ENCODE measurements at regions of chr12 and their contacts with region 1.

Region 1: DNA sequence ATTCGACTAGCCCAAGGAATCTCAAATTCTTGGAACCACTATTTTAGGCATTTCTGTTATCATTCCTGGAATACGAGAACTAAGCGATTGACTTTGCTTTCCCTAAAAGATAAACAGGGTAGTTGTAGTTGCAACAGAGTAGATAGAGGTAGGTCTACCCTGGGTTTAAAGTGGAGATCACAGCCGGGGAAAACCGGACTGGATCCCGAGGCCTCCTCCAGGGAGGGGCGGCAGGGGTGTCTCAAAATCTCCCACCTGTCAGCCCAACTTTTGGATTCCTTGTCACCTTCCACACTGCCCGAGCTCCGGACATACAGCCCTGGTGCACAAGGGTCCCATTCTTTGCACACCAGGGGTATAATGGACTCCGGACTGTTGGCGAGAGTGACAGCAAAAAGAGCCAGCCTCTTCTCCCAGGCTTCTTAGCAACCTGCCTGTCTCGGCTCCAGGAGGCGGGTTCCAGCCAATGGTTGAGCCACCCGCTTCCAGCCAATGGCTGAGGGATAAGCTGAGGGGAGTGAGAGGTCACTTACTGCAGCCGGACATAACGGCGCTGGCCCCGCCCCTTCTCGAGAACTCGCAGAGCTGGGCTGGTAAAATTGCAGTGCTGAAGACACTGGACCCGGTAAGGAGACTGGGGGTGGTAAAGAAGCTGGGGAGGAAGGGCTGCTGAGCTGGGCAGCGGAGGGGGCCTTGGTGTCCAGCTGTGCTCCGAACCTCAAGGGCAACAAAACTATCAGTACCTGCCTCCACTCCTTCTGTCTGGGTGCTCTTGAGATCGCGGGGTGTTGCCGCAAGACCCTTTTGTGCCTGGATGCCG is at the start of gene SUOX:
- DNase-seq: peak; percentile 54
- H3K4me3 Mint-ChIP-seq: peak within 1 kb of the TSS; percentile 57
- H3K27ac Mint-ChIP-seq: peak within 1 kb of the TSS; percentile 42
- H3K4me1 Mint-ChIP-seq: peaks cover 35% of the 10 kb centered on the region
- H3K27me3 Mint-ChIP-seq: peaks cover 30% of the 10 kb centered on the region

Region 2: GRCh38 chr12:55973598-55974307 is 23.2 kb before region 1 on chr12 and contains the start of gene RAB5B:
- CTCF ChIA-PET with region 1: interaction called, 14 read pairs
- DNase-seq: peak; percentile 99
- H3K4me3 Mint-ChIP-seq: no peak within 1 kb of the TSS
- H3K27ac Mint-ChIP-seq: no peak within 1 kb of the TSS
- H3K4me1 Mint-ChIP-seq: peaks cover 27% of the 10 kb centered on the region
- H3K27me3 Mint-ChIP-seq: no peaks in the 10 kb centered on the region

Region 3: DNA sequence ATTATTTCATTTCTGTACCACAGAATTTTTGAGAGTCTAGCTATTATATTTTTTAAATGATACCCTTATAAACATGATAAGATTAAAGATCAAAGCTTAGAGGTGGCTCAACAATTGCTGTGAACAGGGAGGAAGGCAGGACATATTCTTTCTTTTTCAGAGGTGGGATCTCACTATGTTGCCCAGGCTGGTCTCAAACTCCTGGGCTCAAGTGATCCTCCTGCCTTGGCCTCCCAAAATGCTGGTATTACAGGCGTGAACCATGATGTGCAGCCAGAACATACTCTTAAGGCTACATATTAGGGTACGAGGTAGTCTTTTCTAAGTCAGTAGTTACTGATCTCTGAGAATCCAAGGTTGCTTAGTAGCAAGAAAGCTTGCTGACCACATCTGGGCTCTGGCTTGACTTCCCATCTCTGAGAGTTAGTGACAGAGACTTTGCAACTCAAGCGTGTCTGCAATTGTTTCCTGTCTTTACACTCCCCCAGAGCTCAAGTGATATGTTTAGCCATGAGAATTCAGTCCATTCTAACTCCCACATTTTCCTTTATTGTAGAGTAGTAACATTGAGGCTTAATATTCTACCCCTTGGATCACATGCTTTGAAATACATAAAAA is 14.5 kb before region 1 on chr12:
- CTCF ChIA-PET with region 1: interaction called, 17 read pairs
- DNase-seq: no peak
- H3K4me3 Mint-ChIP-seq: no peak overlapping the region
- H3K27ac Mint-ChIP-seq: no peak overlapping the region
- H3K4me1 Mint-ChIP-seq: peaks cover 6% of the 10 kb centered on the region
- H3K27me3 Mint-ChIP-seq: no peaks in the 10 kb centered on the region

Region 4: DNA sequence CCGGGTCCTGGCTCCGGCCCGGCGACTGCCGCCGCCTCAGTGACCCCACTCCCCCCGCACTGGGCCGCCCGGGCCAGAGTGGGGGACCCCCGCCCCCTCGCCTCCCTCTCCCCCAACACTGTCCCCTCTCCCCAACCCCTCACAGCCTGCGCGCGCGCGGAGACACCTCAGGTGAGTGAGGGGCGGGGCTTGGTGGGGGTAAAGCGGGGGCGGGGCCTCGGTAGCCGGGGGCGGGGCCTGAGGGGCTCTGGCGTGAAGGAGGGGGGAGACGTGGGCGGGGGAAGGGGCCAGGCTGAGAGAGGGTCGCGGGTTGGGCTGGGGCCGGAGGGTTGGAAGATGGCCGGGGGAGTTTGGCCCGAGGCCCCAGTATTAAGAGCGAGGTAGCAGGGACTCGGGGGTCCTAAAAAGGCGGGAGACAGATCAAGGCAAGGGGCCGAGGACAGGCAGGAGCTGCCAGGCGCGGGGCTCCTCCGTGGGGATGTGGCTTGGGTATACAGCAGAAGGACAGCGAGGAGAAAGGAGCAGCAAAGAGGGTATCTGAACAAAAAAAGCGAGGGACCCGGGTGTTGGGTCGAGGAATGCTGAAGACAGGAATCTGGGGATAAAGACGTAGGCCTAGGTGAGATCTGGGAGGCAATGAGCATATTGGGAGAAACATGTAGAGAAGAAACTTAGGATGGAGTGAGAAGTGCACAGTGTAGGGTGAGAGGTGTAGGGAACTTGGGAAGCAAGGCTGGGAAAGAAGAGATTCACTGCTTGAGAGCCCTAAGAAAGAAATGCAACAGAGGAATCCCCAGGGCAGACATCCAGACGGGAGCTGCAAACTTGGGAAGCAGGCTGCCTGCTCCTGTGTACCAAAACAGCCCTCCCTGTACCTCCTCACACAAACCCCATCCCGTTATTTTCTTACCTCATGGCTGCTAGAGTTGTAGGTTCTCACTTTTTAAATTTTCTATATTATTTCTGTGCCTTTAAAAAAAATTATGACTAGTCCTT is 10.9 kb after region 1 on chr12:
- CTCF ChIA-PET with region 1: interaction called, 10 read pairs
- DNase-seq: peak; percentile 79
- H3K4me3 Mint-ChIP-seq: peak overlapping the region; percentile 77
- H3K27ac Mint-ChIP-seq: peak overlapping the region; percentile 40
- H3K4me1 Mint-ChIP-seq: peaks cover 36% of the 10 kb centered on the region
- H3K27me3 Mint-ChIP-seq: peaks cover 15% of the 10 kb centered on the region

Region 5: GRCh38 chr12:56029666-56030293 is 32.9 kb after region 1 on chr12:
- CTCF ChIA-PET with region 1: interaction called, 128 read pairs
- DNase-seq: peak; percentile 70
- H3K4me3 Mint-ChIP-seq: no peak overlapping the region
- H3K27ac Mint-ChIP-seq: peak overlapping the region; percentile 6
- H3K4me1 Mint-ChIP-seq: peaks cover 53% of the 10 kb centered on the region
- H3K27me3 Mint-ChIP-seq: no peaks in the 10 kb centered on the region

Region 6: DNA sequence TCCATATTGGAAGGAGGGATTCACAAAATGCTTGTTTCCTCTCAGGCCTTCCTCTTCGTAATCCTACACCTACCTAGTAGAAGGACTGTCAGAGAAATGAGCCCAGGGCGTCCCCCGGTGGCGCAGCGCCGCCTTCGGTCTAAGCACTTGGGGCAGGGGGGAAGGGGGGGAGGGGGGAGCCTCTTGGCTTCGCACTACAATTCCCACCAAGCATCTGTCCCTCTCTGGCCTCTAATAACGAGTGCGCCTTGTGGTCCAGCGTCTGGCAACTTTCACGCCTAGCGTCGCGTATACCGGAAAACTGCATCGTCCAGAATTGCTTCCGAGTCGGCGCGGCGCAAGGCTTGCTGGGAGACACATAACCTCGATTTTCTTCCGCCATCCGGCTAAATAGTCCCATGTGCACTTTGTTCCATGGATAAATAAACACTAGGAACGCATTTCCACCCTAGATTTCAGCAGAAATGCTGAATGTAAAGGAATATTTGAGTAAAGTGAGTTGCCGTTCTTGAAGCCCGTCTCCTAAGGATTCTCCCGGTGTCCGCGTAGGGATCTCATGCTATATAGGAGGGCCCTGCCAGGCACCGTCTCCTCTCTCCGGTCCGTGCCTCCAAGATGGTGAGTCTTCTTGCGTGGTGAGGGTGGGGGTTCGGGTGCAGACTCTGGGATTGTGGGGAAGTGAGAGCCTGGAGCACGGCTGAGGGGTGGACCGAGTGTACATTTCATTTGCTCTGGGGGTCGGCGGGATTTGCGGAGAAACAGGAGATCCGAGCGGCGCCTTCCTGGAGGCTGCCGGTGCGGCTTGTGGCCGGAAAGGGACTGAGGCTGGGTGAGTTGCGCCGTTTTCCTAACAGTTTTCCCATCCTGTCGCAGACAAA is 44.9 kb after region 1 on chr12 and contains the start of gene RPS26:
- CTCF ChIA-PET with region 1: interaction called, 43 read pairs
- DNase-seq: peak; percentile 95
- H3K4me3 Mint-ChIP-seq: peak within 1 kb of the TSS; percentile 92
- H3K27ac Mint-ChIP-seq: peak within 1 kb of the TSS; percentile 91
- H3K4me1 Mint-ChIP-seq: peaks cover 54% of the 10 kb centered on the region
- H3K27me3 Mint-ChIP-seq: peaks cover 3% of the 10 kb centered on the region